ENCODE measurements at regions of chr11 and their contacts with region 1.

Region 1: GRCh38 chr11:64803163-64803845 is at the start of gene MAP4K2:
- DNase-seq: peak; percentile 91
- ATAC-seq: peak; percentile 80
- H3K4me3 Mint-ChIP-seq: peak within 1 kb of the TSS; percentile 87
- H3K27ac Mint-ChIP-seq: peak within 1 kb of the TSS; percentile 91
- H3K4me1 Mint-ChIP-seq: peaks cover 52% of the 10 kb centered on the region
- H3K27me3 Mint-ChIP-seq: no peaks in the 10 kb centered on the region
- CTCF ChIP-seq: no peak
- total RNA-seq, gene MAP4K2: 69.1 and 73.6 TPM in 2 replicates

Region 2: DNA sequence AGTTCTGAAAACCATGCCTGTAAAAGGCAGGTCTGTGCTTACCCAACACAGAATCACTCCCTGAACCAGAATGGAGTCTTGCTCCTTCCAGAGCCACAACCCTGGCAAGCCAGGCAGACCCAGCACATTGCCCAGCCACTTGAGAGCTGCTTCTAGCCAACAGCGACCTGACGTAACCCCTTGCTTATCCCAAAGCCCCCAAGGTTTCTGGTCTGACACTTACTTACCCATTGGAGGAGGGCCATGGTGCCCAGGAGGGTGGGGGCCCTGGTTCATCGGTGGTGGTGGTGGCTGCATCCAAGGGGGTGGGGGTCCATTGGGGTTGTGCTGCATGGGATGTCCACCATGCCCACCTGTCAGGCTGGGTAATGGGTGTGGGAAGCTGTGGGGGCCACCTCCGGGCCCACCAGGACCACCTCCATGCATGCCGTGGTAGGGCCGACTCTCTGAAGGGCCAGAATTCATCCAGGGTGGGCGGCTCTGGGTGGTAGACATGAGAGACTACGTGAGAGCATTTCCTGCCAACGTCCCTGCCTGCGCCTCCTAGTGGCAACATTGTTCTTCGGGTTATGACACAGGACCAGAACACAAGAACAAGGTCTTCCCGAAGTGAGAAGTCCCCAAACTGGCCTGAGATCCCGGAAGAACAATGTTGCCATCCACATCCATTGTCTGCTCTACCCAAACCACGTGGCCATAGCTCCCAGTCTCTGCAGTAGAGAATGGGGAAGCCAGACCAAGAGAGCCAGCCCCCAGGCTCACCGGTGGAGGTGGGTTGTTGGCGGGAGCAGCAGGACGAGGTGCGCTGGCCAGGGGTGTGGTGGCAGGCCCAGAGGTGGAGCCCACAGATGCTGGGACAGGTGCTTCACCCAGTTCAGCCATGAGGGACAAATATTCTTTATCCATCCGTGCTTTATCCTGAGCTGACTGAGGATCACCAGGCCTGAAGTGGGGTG is 35.7 kb before region 1 on chr11:
- CTCF ChIA-PET with region 1: interaction called, 3 read pairs
- POLR2A ChIA-PET with region 1: interaction called, 16 read pairs
- intact Hi-C with region 1: no loop called
- DNase-seq: peak; percentile 60
- ATAC-seq: no peak
- H3K4me3 Mint-ChIP-seq: peak overlapping the region; percentile 11
- H3K27ac Mint-ChIP-seq: peak overlapping the region; percentile 85
- H3K4me1 Mint-ChIP-seq: peaks cover 91% of the 10 kb centered on the region
- H3K27me3 Mint-ChIP-seq: no peaks in the 10 kb centered on the region
- CTCF ChIP-seq: peak; percentile 82

Region 3: DNA sequence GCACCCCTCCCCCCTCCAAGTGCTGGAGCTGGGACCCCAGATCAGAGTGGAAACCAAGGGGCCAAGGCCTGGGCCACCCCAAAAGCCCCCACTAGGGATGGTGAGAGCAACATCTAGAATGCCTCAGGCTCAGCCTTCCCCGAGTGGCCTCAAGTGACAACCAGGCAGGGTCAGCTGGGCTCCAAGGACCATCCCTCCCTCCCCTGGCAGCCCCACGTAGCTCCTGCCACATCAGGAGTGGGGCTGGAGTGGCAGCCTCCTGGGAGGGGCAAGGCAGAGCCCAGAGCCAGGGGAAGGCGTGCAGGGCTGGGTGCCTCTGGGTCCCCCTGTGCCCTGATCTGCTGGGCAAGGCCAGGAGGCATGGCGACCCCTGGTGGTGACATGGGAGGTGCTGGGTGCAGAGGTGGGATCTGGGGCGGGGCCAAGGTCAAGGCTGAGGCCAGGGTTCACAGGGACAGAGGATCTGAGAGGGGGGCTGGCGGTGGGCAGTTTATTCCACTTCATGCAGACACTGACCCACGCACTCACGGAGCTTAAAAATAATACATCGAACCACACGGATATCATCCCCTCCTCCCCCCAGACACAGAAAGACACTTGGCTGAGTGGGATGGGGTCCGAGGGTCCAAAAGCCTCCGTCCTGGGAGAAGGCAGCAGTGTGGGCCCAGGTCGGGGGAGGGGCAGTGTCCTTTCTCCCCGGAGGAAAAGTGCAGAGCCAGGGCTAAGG is 90.9 kb after region 1 on chr11:
- CTCF ChIA-PET with region 1: interaction called, 3 read pairs
- POLR2A ChIA-PET with region 1: no interaction called
- intact Hi-C with region 1: loop called (anchors 2 kb)
- DNase-seq: peak; percentile 93
- ATAC-seq: peak; percentile 99
- H3K4me3 Mint-ChIP-seq: no peak overlapping the region
- H3K27ac Mint-ChIP-seq: no peak overlapping the region
- H3K4me1 Mint-ChIP-seq: peaks cover 26% of the 10 kb centered on the region
- H3K27me3 Mint-ChIP-seq: no peaks in the 10 kb centered on the region
- CTCF ChIP-seq: peak; percentile 67

Region 4: DNA sequence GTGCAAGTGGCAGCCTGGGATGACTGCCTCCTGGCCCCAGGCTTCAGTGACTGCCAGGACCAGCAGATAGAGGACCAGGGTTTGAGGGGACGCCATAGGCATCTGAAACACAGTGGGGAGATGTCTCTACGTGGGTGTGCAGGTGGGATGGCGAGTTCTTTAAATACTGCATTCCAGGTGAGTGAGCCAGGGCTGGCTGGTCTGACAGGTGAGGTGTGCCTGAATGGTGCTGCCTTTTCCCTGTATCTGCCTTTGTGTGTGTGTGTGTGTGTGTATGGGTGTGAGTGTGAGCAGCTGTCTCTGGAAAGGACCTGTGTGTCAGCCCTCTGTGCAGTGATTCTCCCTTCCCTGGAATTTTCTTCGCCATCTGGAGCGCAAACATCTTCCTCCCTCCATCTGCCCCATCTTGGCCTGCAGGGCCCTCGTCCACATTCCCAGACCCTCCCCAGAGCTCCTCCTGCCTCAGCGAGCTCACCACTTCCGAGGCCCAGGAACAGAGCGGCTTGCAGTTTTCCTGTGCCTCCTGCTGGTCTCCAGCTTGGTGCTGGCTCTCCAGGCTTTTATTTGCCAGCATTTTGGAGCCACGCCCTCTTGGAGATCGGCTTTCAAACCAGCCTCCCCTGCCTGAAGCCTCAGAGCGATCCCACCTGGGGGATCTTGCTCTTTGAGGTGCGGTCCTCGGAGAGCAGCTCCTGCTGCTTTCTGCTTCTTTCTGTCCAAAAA is 132.2 kb after region 1 on chr11 and contains the start of gene GPHA2:
- CTCF ChIA-PET with region 1: no interaction called
- POLR2A ChIA-PET with region 1: no interaction called
- intact Hi-C with region 1: no loop called
- DNase-seq: no peak
- ATAC-seq: no peak
- H3K4me3 Mint-ChIP-seq: no peak within 1 kb of the TSS
- H3K27ac Mint-ChIP-seq: no peak within 1 kb of the TSS
- H3K4me1 Mint-ChIP-seq: no peaks in the 10 kb centered on the region
- H3K27me3 Mint-ChIP-seq: peaks cover 2% of the 10 kb centered on the region
- CTCF ChIP-seq: no peak
- total RNA-seq, gene GPHA2: 0.33 and 0.71 TPM in 2 replicates

Measured in activated B cell treated with CpG ODN at 0.5 μM for 24 hours (primary cell).